ENCODE measurements at regions of chr16 and their contacts with region 1.

Region 1: GRCh38 chr16:49350265-49351095 is 23.1 kb upstream of the C16orf78 start:
- DNase-seq: peak; percentile 75
- ATAC-seq: peak; percentile 72

Region 2: DNA sequence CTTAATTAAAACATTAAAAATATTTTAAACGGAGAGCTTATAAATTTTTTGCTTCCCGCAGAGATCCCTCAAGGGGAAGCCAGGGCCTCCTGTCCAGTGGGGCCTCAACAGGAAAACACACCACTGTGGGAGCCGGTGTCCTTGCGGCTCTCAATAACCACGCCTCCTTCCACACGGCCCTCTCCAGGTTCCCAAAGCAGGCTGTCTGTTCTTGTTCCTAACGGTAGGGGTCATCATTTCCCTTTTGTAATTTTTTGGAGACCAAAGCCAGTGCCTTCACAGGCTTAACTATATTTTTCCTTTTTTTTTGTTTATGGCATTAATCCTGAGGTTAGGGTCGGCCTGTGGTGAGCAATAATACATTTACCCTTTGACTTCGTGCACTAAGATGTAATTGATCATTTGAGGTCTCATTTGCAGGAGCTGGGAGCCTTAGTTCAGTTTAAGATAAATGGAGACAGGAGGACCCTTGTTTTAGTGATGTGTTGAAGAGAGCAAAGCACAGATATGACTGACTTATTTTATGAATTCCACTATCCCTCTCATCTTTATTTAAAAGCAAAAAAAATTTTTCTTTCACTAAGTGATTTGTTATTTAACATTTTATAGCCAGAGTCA is 663.0 kb before region 1 on chr16:
- intact Hi-C with region 1: loop called (anchors 5 kb)
- DNase-seq: peak; percentile 53
- ATAC-seq: peak; percentile 79

Region 3: DNA sequence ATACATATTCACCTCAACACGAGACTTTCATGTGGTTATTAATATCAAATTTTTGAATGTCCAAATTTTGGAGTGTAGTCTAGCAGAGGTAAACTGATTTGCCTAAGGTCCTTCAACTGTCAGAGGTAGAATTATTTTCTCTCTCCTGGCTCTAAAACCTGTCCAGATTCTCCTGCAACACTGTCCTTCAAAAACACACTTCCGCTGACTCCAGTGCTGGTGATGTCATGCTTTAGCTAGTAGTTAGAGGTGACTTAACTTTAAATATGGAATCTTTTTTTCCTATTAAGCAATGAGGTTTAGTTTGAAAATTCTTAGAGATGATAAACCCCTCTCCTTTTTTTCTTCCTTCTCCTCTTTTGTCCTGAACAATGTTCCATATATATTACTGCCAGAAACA is 58.1 kb before region 1 on chr16:
- intact Hi-C with region 1: loop called (anchors 10 kb)
- DNase-seq: no peak
- ATAC-seq: no peak

Region 4: DNA sequence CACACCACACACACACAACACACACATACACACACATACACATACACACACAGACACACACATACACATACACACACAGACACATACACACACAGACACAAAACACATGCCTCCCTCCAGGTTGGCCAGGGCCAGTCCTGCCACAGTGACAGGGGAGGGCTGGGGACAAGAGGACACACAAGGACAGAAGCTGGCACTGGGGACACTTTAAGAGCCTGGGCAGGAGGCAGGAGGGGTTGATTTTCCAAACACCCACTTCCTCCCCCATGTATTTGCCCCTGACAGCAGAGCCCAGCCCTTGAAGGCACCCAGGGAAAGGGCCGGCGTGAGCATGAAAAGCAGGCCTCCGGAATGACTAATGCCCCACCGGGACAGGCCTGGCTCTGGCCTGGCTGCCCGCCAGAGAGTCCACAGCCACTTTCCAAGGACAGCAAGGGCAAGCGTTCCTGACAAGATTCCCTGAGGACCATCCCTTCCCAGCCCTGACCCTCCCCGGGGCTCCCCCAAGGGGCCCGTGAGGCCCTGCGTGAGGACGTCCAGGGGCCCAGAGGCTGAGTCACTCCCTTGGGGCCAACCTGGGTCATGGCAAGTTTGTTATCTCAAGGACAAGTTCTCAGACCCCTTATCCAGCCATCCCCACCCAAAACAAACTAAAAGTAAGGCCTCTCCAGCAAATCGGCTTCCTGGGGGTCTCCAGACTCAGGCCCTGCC is 269.8 kb after region 1 on chr16:
- intact Hi-C with region 1: no loop called
- DNase-seq: peak; percentile 92
- ATAC-seq: peak; percentile 90